MCF 10A (cell line): ENCODE measurements at regions of chr11 and their contacts with region 1.

Region 1: DNA sequence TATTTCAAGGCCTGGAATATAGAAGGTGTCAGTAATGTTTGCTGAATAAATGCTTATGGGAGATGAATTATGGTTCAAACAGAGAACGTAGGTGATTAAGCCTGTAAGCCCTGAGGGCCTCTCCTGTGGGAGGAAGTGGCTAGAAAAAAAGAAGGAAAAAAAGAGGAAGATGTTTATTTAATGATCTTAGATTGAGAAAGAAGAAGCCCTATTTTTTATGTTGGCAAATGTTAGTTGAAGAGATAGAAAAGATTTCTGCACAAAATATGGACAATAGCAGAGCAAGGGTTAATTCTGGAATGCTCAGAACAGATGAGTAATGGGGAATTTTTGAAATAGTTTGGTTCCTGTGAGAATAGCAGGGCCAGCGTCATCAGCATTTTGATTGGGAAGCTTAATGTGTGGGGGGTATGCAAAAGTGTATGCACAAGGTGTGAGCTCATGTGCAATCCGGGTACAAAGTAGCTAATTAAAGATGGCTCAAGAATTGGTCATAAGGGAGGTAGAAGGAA is 95.7 kb downstream of the TEAD1 start:
- DNase-seq: peak; percentile 86
- H3K4me3 Mint-ChIP-seq: no peak overlapping the region
- H3K27ac Mint-ChIP-seq: no peak overlapping the region
- H3K4me1 Mint-ChIP-seq: peaks cover 22% of the 10 kb centered on the region
- H3K27me3 Mint-ChIP-seq: no peaks in the 10 kb centered on the region
- CTCF ChIP-seq: no peak

Region 2: DNA sequence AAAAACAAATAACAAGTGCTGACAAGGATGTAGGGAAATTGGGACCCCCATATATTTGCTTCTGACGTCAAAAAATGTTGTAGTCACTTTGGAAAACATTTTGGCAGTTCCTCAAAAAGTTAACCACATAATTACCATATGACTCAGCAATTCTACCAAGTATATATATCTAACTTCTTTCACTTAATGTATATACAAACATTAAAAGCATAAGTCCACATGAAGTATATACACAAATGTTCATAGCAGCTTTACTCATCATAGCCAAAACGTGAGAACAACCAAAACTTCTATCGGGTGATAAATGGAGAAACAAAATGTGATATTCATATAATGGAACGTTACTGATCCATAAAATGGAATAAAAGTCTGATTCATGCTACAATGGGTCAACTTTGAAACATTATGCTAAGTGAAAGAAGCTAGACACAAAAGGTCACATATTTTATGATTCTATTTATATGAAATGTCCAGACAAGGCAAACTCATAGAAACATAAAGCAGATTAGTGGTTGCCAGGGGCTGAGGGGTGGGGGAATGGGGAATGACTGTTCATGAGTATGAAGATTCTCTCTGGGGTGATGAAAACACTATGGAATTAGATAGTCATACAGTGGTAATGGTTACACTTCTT is 144.3 kb before region 1 on chr11:
- CTCF ChIA-PET with region 1: no interaction called
- POLR2A ChIA-PET with region 1: no interaction called
- intact Hi-C with region 1: no loop called
- DNase-seq: peak; percentile 23
- H3K4me3 Mint-ChIP-seq: no peak overlapping the region
- H3K27ac Mint-ChIP-seq: no peak overlapping the region
- H3K4me1 Mint-ChIP-seq: no peaks in the 10 kb centered on the region
- H3K27me3 Mint-ChIP-seq: no peaks in the 10 kb centered on the region
- CTCF ChIP-seq: no peak

Region 3: DNA sequence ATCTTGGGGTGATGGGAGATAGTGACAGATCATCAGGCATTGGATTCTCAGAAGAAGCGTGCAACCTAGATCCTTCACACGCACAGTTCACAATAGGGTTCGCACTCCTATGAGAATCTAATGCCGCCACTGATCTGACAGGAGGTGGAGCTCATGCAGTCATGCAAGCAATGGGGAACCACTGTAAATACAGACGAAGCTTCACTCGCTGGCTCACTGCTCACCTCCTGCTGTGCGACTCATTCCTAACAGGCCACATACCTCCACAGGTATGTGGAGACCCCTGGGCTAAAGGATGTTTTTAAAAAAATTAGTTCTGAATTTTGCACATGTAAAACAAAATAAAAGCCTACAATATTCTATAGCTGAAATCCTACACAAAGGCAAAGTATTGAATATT is 116.2 kb before region 1 on chr11:
- CTCF ChIA-PET with region 1: no interaction called
- POLR2A ChIA-PET with region 1: no interaction called
- intact Hi-C with region 1: no loop called
- DNase-seq: peak; percentile 25
- H3K4me3 Mint-ChIP-seq: no peak overlapping the region
- H3K27ac Mint-ChIP-seq: no peak overlapping the region
- H3K4me1 Mint-ChIP-seq: no peaks in the 10 kb centered on the region
- H3K27me3 Mint-ChIP-seq: no peaks in the 10 kb centered on the region
- CTCF ChIP-seq: no peak

Region 4: GRCh38 chr11:12693479-12694181 is 76.3 kb before region 1 on chr11:
- CTCF ChIA-PET with region 1: no interaction called
- POLR2A ChIA-PET with region 1: interaction called, 38 read pairs
- intact Hi-C with region 1: no loop called
- DNase-seq: peak; percentile 97
- H3K4me3 Mint-ChIP-seq: peak overlapping the region; percentile 62
- H3K27ac Mint-ChIP-seq: peak overlapping the region; percentile 94
- H3K4me1 Mint-ChIP-seq: peaks cover 75% of the 10 kb centered on the region
- H3K27me3 Mint-ChIP-seq: no peaks in the 10 kb centered on the region
- CTCF ChIP-seq: no peak

Region 5: DNA sequence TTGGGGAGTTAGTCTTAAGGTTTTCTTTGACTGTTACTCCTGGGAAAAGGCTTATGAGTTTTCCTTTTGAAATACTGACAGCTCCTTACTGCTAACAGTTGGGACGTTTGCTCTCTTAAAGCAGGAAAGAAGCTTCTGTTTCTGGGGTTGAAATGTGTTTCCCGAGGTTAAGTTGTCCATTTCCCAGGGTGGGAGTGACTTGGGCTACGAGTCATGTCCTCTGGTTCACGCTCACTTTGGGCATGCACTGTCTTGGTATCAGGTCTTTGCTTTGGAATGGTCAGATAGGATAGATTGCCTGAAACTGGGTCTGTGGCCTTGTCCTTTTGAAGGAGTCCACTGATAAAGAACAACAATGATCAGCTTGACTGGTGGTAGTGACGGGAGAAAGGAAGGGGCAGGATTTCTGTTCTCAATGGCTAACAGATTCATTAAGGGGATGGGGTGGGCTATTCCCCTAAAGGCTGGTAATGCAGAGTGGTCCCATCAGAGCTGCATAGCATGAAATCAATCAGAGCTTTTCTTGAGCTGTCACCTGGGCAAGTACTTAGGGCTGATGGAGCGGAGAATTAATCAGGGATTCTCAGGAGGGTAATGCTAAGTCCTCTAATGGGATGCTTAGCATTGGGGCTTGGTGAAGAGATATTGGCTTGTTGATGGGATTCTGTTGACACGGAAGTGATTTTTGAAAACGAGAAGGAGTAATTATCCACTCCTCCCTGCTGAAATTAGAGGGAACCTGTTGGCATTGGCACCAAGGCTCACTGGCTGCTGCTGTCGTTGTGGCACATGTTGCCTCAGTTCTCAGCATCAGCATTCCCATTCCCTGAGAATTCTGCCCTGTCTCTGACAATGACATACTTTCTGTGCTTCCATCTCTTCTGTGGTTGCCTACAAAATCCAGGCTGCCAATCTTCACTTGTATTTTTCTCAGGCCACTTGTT is 14.1 kb before region 1 on chr11:
- CTCF ChIA-PET with region 1: interaction called, 7 read pairs
- POLR2A ChIA-PET with region 1: interaction called, 41 read pairs
- intact Hi-C with region 1: no loop called
- DNase-seq: peak; percentile 32
- H3K4me3 Mint-ChIP-seq: no peak overlapping the region
- H3K27ac Mint-ChIP-seq: peak overlapping the region; percentile 92
- H3K4me1 Mint-ChIP-seq: peaks cover 44% of the 10 kb centered on the region
- H3K27me3 Mint-ChIP-seq: no peaks in the 10 kb centered on the region
- CTCF ChIP-seq: no peak

Region 6: GRCh38 chr11:12827929-12828812 is 58.3 kb after region 1 on chr11:
- CTCF ChIA-PET with region 1: no interaction called
- POLR2A ChIA-PET with region 1: interaction called, 11 read pairs
- intact Hi-C with region 1: no loop called
- DNase-seq: peak; percentile 79
- H3K4me3 Mint-ChIP-seq: peak overlapping the region; percentile 80
- H3K27ac Mint-ChIP-seq: peak overlapping the region; percentile 85
- H3K4me1 Mint-ChIP-seq: peaks cover 29% of the 10 kb centered on the region
- H3K27me3 Mint-ChIP-seq: no peaks in the 10 kb centered on the region
- CTCF ChIP-seq: no peak